SK-N-SH (cell line): ENCODE measurements at regions of chr6 and their contacts with region 1.

Region 1: GRCh38 chr6:169831450-169832246 is 80.2 kb downstream of the ERMARD start:
- DNase-seq: peak; percentile 88
- H3K4me3 ChIP-seq: peak overlapping the region in 1 of 2 experiments; percentile 29; a peak in 1 of 4 replicates
- H3K27ac ChIP-seq: no peak overlapping the region
- H3K4me1 ChIP-seq: peaks cover 2 to 3% of the 10 kb centered on the region in 2 experiments; a peak in 2 of 4 replicates
- H3K27me3 ChIP-seq: no peaks in the 10 kb centered on the region; the same call in 1 of the 2 replicates
- CTCF ChIP-seq: peak; percentile 84
- EP300 ChIP-seq: no peak
- RAD21 ChIP-seq: peak; percentile 92

Region 2: GRCh38 chr6:169669147-169669546 is 162.5 kb before region 1 on chr6:
- CTCF ChIA-PET with region 1: no interaction called
- POLR2A ChIA-PET with region 1: no interaction called
- DNase-seq: no peak
- H3K4me3 ChIP-seq: no peak overlapping the region
- H3K27ac ChIP-seq: no peak overlapping the region
- H3K4me1 ChIP-seq: no peaks in the 10 kb centered on the region; a peak in 1 of 4 replicates
- H3K27me3 ChIP-seq: no peaks in the 10 kb centered on the region
- CTCF ChIP-seq: no peak
- EP300 ChIP-seq: no peak
- RAD21 ChIP-seq: no peak

Region 3: GRCh38 chr6:169723200-169723909 is 108.3 kb before region 1 on chr6:
- CTCF ChIA-PET with region 1: no interaction called
- POLR2A ChIA-PET with region 1: no interaction called
- DNase-seq: peak; percentile 81
- H3K4me3 ChIP-seq: peak overlapping the region; percentile 65 to 82
- H3K27ac ChIP-seq: peak overlapping the region; percentile 56 to 74
- H3K4me1 ChIP-seq: peaks cover 15 to 19% of the 10 kb centered on the region in 2 experiments; a peak in 3 of 4 replicates
- H3K27me3 ChIP-seq: no peaks in the 10 kb centered on the region
- CTCF ChIP-seq: no peak
- EP300 ChIP-seq: no peak
- RAD21 ChIP-seq: no peak

Region 4: DNA sequence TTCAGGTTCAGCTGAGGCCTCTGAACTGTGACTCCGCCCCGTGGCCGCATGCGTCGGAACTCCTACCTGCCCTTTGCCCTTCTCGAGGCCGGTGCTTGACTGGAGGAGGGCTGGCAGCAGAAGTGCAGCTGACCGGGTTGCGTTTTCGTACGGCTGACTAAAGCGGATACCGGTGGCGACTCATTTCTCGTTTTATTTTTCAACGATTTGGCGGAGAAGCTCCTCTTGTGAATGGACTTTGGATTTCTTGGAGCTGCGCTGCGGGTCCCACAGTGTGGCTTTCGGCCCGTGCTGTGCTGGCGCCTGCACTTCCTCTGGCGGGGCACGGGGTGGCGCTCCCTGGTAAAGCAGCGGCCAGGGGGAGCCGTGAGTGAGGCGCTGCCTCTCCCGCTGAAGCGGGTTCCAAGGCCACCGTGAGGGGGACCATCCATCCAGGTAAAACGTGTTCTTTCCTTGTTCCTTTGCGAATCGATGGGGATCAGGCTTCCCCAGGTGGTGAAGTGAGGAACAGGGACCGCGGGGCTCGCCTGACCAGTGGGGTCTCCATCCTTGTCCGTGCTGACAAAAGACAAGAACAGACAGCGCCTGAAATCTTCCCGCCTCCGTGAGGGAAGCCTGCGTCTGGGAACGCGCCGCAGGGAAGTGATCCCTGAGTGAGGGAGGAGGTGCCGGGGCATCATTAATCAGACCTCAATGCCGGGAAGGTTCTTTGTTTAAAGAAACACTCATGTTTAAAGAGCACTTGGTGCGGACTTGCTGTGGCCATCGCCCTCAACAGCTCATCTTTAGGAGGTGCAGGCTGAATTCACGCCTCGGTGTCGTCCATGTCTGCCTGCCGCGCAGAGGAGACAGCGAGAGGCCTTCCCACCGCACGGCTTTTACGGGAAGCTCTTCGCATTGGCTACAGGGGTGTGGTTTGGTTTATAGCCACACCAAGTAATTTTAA is 41.4 kb before region 1 on chr6:
- CTCF ChIA-PET with region 1: interaction called, 40 read pairs
- POLR2A ChIA-PET with region 1: no interaction called
- DNase-seq: peak; percentile 94
- H3K4me3 ChIP-seq: peak overlapping the region; percentile 51 to 54
- H3K27ac ChIP-seq: peak overlapping the region; percentile 5 to 28; a peak in 2 of 4 replicates
- H3K4me1 ChIP-seq: peaks cover 0 to 14% of the 10 kb centered on the region in 2 experiments; a peak in 1 of 4 replicates
- H3K27me3 ChIP-seq: no peaks in the 10 kb centered on the region
- CTCF ChIP-seq: peak; percentile 95
- EP300 ChIP-seq: no peak
- RAD21 ChIP-seq: peak; percentile 87

Region 5: GRCh38 chr6:169810066-169810989 is 21.3 kb before region 1 on chr6:
- CTCF ChIA-PET with region 1: interaction called, 14 read pairs
- POLR2A ChIA-PET with region 1: no interaction called
- DNase-seq: peak; percentile 65
- H3K4me3 ChIP-seq: no peak overlapping the region
- H3K27ac ChIP-seq: no peak overlapping the region
- H3K4me1 ChIP-seq: peaks cover 0 to 10% of the 10 kb centered on the region in 2 experiments; a peak in 1 of 4 replicates
- H3K27me3 ChIP-seq: no peaks in the 10 kb centered on the region
- CTCF ChIP-seq: no peak
- EP300 ChIP-seq: no peak
- RAD21 ChIP-seq: no peak

Region 6: DNA sequence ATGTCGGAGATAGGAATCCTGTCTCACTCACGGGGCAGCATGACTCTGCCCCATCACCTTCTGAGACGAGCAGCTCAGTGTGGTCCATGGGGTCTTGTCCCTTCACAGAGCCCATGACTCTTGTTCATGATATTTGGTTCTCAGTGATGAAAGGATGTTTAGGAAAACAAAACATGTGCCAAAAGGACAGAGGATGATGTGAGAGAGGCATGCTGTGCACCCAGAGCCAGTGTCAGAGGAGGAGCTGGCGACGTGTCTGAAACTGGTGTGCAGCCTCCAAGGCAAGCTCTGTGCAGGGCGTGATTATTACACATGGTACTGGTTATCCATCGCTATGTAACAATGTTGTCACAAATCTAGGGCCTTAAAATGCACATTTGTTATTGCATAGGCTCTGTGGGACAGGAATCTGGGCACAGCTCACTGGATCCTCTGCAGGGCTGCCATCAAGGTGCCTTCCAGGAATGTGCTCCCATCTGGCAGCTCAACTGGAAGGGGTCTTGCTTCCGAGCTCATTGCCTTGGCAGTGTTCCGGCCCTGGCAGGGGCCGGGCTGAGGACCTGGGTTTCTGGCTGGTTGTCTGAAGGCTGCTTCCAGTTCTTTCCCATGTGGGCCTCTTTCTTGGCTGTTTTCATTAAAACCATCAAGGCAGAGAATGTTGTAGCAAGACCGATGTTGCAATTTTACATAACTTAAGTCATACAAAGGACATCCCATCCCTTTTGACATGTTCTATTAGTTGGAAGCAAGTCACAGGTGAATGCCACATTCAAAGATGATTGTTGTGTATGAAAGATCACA is 95.2 kb after region 1 on chr6:
- CTCF ChIA-PET with region 1: interaction called, 11 read pairs
- POLR2A ChIA-PET with region 1: no interaction called
- DNase-seq: no peak
- H3K4me3 ChIP-seq: no peak overlapping the region
- H3K27ac ChIP-seq: no peak overlapping the region
- H3K4me1 ChIP-seq: no peaks in the 10 kb centered on the region; a peak in 1 of 4 replicates
- H3K27me3 ChIP-seq: no peaks in the 10 kb centered on the region
- CTCF ChIP-seq: no peak
- EP300 ChIP-seq: no peak
- RAD21 ChIP-seq: no peak

Region 7: GRCh38 chr6:170295510-170296422 is 464.1 kb after region 1 on chr6:
- CTCF ChIA-PET with region 1: interaction called, 60 read pairs
- POLR2A ChIA-PET with region 1: no interaction called
- DNase-seq: peak; percentile 78
- H3K4me3 ChIP-seq: peak overlapping the region; percentile 45 to 57
- H3K27ac ChIP-seq: no peak overlapping the region
- H3K4me1 ChIP-seq: peaks cover 0 to 22% of the 10 kb centered on the region in 2 experiments; a peak in 1 of 4 replicates
- H3K27me3 ChIP-seq: peaks cover 69% of the 10 kb centered on the region
- CTCF ChIP-seq: no peak
- EP300 ChIP-seq: no peak
- RAD21 ChIP-seq: no peak

Region 8: DNA sequence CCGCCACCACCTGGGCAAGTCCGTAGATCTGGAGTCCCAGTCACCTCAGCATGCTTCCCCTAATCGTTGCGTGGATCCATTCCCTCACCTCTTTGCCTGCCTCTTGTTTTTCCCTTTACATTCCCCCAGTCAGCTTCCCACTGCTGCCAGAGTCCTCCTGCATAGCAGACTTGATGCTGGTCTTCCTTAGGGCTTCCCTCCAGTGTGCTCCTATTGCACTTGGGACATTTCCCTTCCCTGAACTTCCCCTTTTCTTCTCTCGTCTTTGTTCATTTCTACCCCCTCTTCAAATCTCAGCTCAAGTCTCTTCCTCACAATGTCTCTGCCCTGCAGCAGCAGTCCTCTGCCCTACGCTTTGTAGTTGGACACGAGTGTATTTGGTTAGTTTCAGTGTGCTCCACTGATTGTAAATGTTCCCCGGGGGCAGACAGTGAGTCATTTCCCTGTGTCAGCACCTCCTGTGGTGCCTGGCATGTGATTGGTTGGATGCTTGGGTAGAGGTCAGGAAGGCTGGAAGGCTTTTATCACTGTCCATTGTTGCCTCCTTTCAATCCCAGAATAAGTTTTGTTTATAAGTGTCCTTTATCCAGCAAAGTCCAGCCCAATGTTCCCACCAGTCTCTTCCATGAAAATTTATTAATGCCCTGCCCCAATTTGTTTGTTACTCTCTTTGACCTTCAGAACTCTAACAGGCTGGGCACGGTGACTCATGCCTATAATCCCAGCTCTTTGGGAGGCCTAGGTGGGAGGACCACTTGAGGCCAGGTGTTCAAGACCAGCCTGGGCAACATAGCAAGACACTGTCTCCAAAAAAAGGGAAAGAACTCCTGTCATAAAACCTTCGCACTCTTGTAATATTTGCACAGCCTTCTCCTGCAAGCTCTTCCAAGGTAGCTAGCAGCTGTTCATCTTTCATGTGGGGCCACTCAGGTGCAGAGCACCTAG is 513.3 kb after region 1 on chr6:
- CTCF ChIA-PET with region 1: interaction called, 10 read pairs
- POLR2A ChIA-PET with region 1: no interaction called
- DNase-seq: no peak
- H3K4me3 ChIP-seq: no peak overlapping the region
- H3K27ac ChIP-seq: peak overlapping the region in 1 of 2 experiments; percentile 4; a peak in 1 of 4 replicates
- H3K4me1 ChIP-seq: no peaks in the 10 kb centered on the region; a peak in 2 of 4 replicates
- H3K27me3 ChIP-seq: no peaks in the 10 kb centered on the region
- CTCF ChIP-seq: no peak
- EP300 ChIP-seq: no peak
- RAD21 ChIP-seq: no peak

Region 9: DNA sequence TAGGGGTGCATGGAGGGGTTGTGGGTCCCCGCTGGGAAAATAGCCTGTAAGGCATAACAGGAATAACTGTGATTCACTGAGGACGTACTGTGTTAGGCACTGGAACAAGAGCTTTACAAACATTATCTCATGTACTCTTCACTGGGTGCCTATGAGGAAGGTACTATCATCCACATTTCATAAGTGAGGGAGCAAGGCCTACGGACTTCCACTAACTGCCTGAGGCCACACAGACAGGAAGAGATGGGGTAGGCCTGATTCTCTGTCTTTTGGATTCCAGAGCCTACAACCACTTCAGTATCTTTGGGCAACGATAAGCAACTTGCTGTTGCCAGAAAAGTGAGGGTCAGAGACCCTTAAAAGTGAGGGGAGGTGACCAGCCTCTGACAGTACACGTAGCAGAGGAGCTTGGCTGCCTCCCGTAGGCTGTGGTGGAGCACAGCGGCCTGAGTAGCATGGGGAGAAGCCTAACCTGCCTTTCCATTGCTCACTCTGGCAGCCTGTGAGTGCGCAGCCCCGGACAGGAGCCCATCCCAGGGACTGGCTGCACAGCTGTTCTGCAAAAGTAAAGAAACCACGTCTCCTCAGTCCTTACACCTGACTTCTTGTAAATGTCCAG is 691.0 kb after region 1 on chr6:
- CTCF ChIA-PET with region 1: interaction called, 110 read pairs
- POLR2A ChIA-PET with region 1: no interaction called
- DNase-seq: peak; percentile 51
- H3K4me3 ChIP-seq: no peak overlapping the region
- H3K27ac ChIP-seq: no peak overlapping the region
- H3K4me1 ChIP-seq: peaks cover 0 to 9% of the 10 kb centered on the region in 2 experiments; a peak in 1 of 4 replicates
- H3K27me3 ChIP-seq: no peaks in the 10 kb centered on the region
- CTCF ChIP-seq: peak; percentile 54
- EP300 ChIP-seq: no peak
- RAD21 ChIP-seq: peak; percentile 65